Stomach (tissue), 19 donors: ENCODE measurements at regions of chr13 and their contacts with region 1.

Region 1: DNA sequence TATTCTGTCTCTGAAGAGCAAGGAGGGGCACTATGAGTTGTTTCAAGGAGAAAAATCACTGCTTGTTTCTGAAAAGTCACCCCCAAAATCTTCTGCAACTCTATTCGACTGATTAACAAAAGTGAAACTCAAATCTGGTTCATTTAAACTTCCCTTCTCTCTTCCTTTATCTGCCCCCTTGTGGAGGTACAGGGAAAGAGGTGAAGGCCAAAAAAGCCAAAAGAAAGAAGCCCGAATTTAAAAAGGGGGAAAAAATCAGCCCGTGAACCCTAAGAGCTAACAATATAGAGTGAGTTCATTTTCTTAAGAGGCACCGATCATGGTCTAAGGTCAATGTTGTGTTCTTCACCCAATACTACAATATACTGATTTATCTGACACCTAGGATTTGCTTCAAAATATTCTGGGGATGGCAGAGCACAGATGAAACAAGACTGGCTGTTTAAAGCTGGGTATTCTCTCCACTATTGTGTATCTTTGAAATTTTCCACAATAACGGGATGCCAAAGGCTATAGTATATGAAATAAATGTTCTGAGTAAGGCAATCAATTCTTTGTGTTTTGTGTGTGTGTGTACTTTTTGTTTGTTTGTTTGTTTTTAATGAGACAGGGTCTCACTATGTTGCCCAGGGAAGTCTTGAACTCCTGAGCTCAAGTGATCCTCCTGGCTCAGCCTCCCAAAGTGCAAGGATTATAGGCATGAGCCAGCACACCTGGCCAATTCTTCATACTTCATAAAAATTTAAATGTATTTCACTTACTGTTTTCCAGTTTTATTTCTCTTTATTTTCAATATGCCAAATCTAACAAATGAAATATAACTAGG is 55.0 kb upstream of the EEF1AKMT1 start:
- DNase-seq: peak in 1 of 2 donors; percentile 77
- H3K4me3 ChIP-seq: peak overlapping the region in 2 of 4 donors; percentile 19 to 23
- H3K27ac ChIP-seq: peak overlapping the region in 2 of 5 donors; percentile 17 to 56
- H3K4me1 ChIP-seq: peaks cover 0 to 50% (median 9%) of the 10 kb centered on the region in 4 donors
- H3K27me3 ChIP-seq: no peaks in the 10 kb centered on the region
- CTCF ChIP-seq: peak in 5 of 7 experiments; percentile 56 to 83 (median 80)
- EP300 ChIP-seq: no peak
- POLR2A ChIP-seq: no peak

Region 2: DNA sequence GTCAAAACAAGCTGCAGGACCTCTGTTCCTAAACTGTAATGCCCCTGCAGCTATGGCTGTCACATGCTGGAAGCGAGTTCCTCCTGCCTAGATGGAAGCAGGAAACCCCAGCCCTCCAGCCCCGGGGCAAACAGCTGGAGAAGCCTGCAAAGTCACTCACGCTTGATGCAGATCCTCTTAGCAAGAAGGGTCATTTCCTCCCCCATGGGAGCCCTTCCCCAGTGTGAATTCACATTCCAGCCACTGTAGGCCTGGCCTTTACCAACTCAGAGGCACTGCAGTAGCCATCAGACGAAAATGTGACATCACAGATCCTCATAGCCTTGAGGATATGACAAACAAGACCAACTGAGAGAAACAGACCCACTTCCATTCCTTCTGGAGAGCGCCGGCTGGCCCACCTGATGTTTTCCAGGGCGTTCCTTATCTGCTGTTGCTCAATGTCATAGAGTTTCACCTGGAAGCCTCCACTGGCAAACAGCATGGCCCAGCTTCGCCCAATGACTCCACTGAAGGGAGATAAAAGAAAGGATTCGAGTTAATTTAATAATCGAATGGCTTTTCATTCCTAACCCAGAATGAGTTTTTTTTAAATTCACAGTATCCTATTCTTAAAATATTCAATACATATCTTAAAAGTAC is 316.6 kb before region 1 on chr13:
- intact Hi-C with region 1: loop called (anchors 10 kb)
- DNase-seq: peak in 1 of 2 donors; percentile 35
- H3K4me3 ChIP-seq: no peak overlapping the region
- H3K27ac ChIP-seq: no peak overlapping the region
- H3K4me1 ChIP-seq: no peaks in the 10 kb centered on the region
- H3K27me3 ChIP-seq: no peaks in the 10 kb centered on the region
- CTCF ChIP-seq: no peak
- EP300 ChIP-seq: no peak
- POLR2A ChIP-seq: no peak

Region 3: GRCh38 chr13:20607015-20607414 is 221.7 kb before region 1 on chr13:
- intact Hi-C with region 1: no loop called
- DNase-seq: no peak
- H3K4me3 ChIP-seq: no peak overlapping the region
- H3K27ac ChIP-seq: no peak overlapping the region
- H3K4me1 ChIP-seq: no peaks in the 10 kb centered on the region
- H3K27me3 ChIP-seq: no peaks in the 10 kb centered on the region
- CTCF ChIP-seq: no peak
- EP300 ChIP-seq: no peak
- POLR2A ChIP-seq: no peak

Region 4: DNA sequence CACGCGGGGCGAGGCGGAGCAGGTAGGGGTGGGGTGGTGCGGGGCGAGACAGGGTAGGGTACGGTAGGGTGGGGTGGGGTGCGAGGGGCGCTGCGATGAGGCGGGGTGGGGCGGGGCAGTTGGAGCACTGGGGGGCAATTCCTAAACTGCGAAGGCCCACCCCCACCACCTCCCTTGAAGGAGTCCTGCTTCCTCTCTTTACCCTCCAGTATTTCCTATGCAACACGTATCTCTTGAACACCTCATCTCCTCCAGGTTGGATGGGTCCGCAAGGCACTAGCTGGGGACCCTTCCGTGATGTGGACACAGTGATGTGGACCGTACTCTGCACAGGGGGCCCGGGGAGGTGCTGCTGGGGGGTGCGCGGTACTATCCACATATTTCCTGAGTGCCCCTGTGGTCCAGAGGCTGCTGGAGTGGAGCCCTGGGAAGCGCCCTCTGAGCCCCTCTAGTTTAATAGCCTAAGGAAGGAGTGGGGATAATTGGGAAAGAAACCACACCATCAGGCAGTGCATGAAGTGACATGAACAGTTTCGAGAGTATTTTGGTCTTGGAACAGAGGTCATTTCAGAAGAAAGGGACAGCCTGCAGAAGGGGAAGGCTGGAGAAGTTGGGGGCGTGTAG is 124.2 kb before region 1 on chr13:
- intact Hi-C with region 1: loop called (anchors 5 kb)
- DNase-seq: no peak
- H3K4me3 ChIP-seq: peak overlapping the region; percentile 72 to 86 (median 74)
- H3K27ac ChIP-seq: peak overlapping the region in 2 of 5 donors; percentile 72 to 79
- H3K4me1 ChIP-seq: peaks cover 7 to 23% (median 16%) of the 10 kb centered on the region in 4 donors
- H3K27me3 ChIP-seq: peaks cover 0 to 28% (median 0%) of the 10 kb centered on the region in 3 donors
- CTCF ChIP-seq: no peak
- EP300 ChIP-seq: no peak
- POLR2A ChIP-seq: no peak

Region 5: GRCh38 chr13:20728579-20729311 is 100.0 kb before region 1 on chr13:
- intact Hi-C with region 1: no loop called
- DNase-seq: peak in 1 of 2 donors; percentile 50
- H3K4me3 ChIP-seq: no peak overlapping the region
- H3K27ac ChIP-seq: peak overlapping the region in 1 of 5 donors; percentile 44
- H3K4me1 ChIP-seq: no peaks in the 10 kb centered on the region
- H3K27me3 ChIP-seq: no peaks in the 10 kb centered on the region
- CTCF ChIP-seq: no peak
- EP300 ChIP-seq: no peak
- POLR2A ChIP-seq: no peak